B cell (primary cell): ENCODE measurements at regions of chr6 and their contacts with region 1.

Region 1: GRCh38 chr6:3356056-3356761 is 97.5 kb downstream of the PSMG4 start:
- DNase-seq: peak; percentile 97
- ATAC-seq: peak; percentile 96
- H3K4me3 ChIP-seq: peak overlapping the region; percentile 0 to 82 (median 66)
- H3K4me3 Mint-ChIP-seq: peak overlapping the region; percentile 96
- H3K27ac ChIP-seq: peak overlapping the region; percentile 67 to 82
- H3K27ac Mint-ChIP-seq: peak overlapping the region; percentile 96
- H3K4me1 ChIP-seq: peaks cover 26 to 37% of the 10 kb centered on the region in 2 donors
- H3K4me1 Mint-ChIP-seq: peaks cover 48% of the 10 kb centered on the region
- H3K27me3 ChIP-seq: no peaks in the 10 kb centered on the region
- H3K27me3 Mint-ChIP-seq: no peaks in the 10 kb centered on the region
- CTCF ChIP-seq: no peak

Region 2: DNA sequence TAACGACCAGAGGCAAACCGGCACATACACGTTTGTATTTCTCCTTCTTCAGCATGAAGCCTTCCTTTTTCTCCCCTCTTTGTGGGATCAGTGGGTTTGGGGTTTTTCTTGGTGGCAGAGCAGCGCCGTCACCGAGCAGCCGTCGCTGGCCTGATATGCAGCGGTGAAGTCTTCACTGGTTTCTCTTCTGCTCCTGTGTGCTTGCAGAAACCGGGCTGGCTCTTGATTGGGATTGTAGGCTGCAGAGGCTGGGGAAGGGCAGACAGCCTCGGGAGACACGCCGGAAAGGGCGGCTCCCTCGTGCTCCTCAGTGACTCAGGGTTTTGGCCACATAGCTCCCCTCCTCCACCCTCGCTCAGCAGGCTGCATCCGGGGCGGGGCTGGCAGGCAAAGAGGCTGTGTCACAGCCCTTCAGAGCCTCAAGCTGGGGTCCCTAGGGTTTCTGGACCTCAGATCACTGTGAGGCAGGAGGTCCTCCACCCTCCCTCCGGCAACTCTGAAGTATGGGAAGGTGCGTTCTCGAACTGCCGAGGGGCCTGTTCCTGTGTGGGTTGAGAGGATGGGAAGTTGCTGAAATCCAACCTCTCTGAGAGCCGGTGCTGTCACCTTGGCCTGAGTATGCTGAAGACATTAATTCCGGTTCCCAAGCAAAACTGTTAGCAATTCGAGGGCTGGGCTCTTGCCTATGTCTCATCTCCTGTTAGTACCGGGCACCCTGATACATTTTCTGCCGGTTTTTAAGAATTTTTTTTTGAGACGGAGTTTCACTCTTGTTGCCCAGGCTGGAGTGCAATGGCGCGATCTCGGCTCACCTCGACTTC is 332.3 kb before region 1 on chr6:
- CTCF ChIA-PET with region 1: no interaction called
- POLR2A ChIA-PET with region 1: no interaction called
- intact Hi-C with region 1: no loop called
- DNase-seq: peak; percentile 82
- ATAC-seq: peak; percentile 79
- H3K4me3 ChIP-seq: peak overlapping the region; percentile 45 to 88 (median 63)
- H3K4me3 Mint-ChIP-seq: peak overlapping the region; percentile 91
- H3K27ac ChIP-seq: peak overlapping the region; percentile 38 to 50
- H3K27ac Mint-ChIP-seq: peak overlapping the region; percentile 74
- H3K4me1 ChIP-seq: peaks cover 59 to 63% of the 10 kb centered on the region in 2 donors
- H3K4me1 Mint-ChIP-seq: peaks cover 50% of the 10 kb centered on the region
- H3K27me3 ChIP-seq: peaks cover 0 to 4% (median 0%) of the 10 kb centered on the region in 4 experiments
- H3K27me3 Mint-ChIP-seq: peaks cover 5% of the 10 kb centered on the region
- CTCF ChIP-seq: no peak

Region 3: GRCh38 chr6:3157131-3157927 is 198.9 kb before region 1 on chr6 and contains the start of gene TUBB2A:
- CTCF ChIA-PET with region 1: no interaction called
- POLR2A ChIA-PET with region 1: no interaction called
- intact Hi-C with region 1: loop called (anchors 2 kb)
- DNase-seq: peak; percentile 91
- ATAC-seq: peak; percentile 90
- H3K4me3 ChIP-seq: peak within 1 kb of the TSS; percentile 47 to 93 (median 65)
- H3K4me3 Mint-ChIP-seq: peak within 1 kb of the TSS; percentile 89
- H3K27ac ChIP-seq: peak within 1 kb of the TSS in 1 of 2 donors; percentile 67
- H3K27ac Mint-ChIP-seq: peak within 1 kb of the TSS; percentile 88
- H3K4me1 ChIP-seq: peaks cover 8 to 18% of the 10 kb centered on the region in 2 donors
- H3K4me1 Mint-ChIP-seq: peaks cover 24% of the 10 kb centered on the region
- H3K27me3 ChIP-seq: peaks cover 0 to 5% (median 0%) of the 10 kb centered on the region in 4 experiments
- H3K27me3 Mint-ChIP-seq: peaks cover 7% of the 10 kb centered on the region
- CTCF ChIP-seq: peak; percentile 70
- total RNA-seq, gene TUBB2A: 4.0 and 4.2 TPM in 2 replicates

Region 4: GRCh38 chr6:3281631-3282475 is 74.4 kb before region 1 on chr6:
- CTCF ChIA-PET with region 1: no interaction called
- POLR2A ChIA-PET with region 1: no interaction called
- intact Hi-C with region 1: loop called (anchors 1 kb)
- DNase-seq: no peak
- ATAC-seq: no peak
- H3K4me3 ChIP-seq: no peak overlapping the region
- H3K4me3 Mint-ChIP-seq: no peak overlapping the region
- H3K27ac ChIP-seq: no peak overlapping the region
- H3K27ac Mint-ChIP-seq: no peak overlapping the region
- H3K4me1 ChIP-seq: peaks cover 0 to 3% of the 10 kb centered on the region in 2 donors
- H3K4me1 Mint-ChIP-seq: peaks cover 2% of the 10 kb centered on the region
- H3K27me3 ChIP-seq: no peaks in the 10 kb centered on the region
- H3K27me3 Mint-ChIP-seq: no peaks in the 10 kb centered on the region
- CTCF ChIP-seq: no peak

Region 5: DNA sequence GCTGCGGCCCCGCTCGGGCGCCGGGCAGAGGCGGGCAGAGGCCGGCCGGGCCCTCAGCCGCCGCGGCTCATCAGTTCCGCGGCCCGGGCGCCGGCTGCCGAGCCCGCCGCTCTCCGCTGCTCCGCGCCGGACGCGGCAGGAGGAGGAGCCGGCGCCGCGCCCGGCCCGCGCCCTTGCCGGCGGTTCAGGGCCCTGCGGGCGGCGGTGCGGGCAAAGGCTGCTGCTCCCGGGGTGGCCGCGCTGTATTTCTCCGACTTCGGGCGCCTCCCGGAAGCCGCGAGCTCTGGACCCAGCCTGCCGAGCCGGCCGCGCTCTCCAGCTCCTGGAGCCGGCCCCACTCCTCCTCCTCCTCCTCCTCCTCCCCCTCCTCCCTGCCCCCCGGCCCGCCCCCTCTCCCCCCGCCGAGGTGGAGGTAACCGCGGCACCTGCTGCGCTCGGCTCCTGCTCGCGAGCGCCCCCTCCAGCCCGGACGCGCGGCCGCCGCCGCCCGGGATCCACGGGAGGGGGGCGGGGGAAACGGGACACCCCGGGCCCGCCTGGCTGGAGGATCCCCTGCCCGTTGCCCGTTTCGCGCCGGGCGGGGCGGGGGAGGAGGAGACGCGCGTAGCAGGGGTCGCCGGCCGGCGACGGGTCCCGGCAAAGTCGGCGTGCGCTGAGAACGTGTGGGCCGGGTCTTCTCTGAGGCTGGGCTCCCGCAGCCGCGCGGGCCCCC is 100.7 kb after region 1 on chr6 and contains the start of gene SLC22A23:
- CTCF ChIA-PET with region 1: no interaction called
- POLR2A ChIA-PET with region 1: no interaction called
- intact Hi-C with region 1: loop called (anchors 2 kb)
- DNase-seq: peak; percentile 81
- ATAC-seq: peak; percentile 80
- H3K4me3 ChIP-seq: peak within 1 kb of the TSS in 4 of 5 experiments; percentile 25 to 51 (median 45)
- H3K4me3 Mint-ChIP-seq: peak within 1 kb of the TSS; percentile 81
- H3K27ac ChIP-seq: no peak within 1 kb of the TSS
- H3K27ac Mint-ChIP-seq: peak within 1 kb of the TSS; percentile 42
- H3K4me1 ChIP-seq: peaks cover 23 to 24% of the 10 kb centered on the region in 2 donors
- H3K4me1 Mint-ChIP-seq: peaks cover 5% of the 10 kb centered on the region
- H3K27me3 ChIP-seq: peaks cover 0 to 58% (median 43%) of the 10 kb centered on the region in 4 experiments
- H3K27me3 Mint-ChIP-seq: peaks cover 38% of the 10 kb centered on the region
- CTCF ChIP-seq: peak; percentile 75
- total RNA-seq, gene SLC22A23: 0.75 and 1.4 TPM in 2 replicates

Region 6: DNA sequence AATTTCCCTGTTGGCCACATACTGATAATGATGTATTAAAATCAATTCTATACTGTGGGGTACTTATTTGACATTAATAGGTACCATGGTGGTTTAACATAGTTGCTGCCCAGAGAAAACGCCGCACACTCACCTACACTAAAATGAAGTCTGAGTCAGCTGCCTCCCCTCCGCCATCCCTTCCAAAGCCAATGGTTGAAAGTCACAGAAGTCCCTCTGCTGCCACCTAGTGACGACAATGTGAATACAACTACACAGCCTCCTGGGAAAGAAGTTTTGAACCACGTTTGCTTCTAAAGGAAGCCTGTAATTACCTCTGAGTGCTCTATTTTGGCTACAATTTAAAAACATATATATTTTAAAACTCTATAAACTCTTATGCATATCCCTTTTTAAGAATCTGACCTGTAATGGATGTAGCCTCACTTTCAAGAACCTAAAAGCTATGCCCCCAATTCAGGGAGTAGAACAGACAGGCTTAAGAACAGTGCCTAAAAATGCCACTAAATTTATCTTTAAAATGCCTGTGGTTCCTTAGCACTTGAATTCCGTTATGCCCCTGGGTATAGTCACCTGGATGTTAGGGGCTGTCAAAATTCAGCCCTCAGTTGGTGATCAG is 799.7 kb after region 1 on chr6:
- CTCF ChIA-PET with region 1: no interaction called
- POLR2A ChIA-PET with region 1: no interaction called
- intact Hi-C with region 1: loop called (anchors 5 kb)
- DNase-seq: peak; percentile 85
- ATAC-seq: peak; percentile 78
- H3K4me3 ChIP-seq: no peak overlapping the region
- H3K4me3 Mint-ChIP-seq: no peak overlapping the region
- H3K27ac ChIP-seq: no peak overlapping the region
- H3K27ac Mint-ChIP-seq: no peak overlapping the region
- H3K4me1 ChIP-seq: peaks cover 4 to 12% of the 10 kb centered on the region in 2 donors
- H3K4me1 Mint-ChIP-seq: peaks cover 31% of the 10 kb centered on the region
- H3K27me3 ChIP-seq: peaks cover 0 to 6% (median 0%) of the 10 kb centered on the region in 4 experiments
- H3K27me3 Mint-ChIP-seq: peaks cover 10% of the 10 kb centered on the region
- CTCF ChIP-seq: peak; percentile 94

Region 7: DNA sequence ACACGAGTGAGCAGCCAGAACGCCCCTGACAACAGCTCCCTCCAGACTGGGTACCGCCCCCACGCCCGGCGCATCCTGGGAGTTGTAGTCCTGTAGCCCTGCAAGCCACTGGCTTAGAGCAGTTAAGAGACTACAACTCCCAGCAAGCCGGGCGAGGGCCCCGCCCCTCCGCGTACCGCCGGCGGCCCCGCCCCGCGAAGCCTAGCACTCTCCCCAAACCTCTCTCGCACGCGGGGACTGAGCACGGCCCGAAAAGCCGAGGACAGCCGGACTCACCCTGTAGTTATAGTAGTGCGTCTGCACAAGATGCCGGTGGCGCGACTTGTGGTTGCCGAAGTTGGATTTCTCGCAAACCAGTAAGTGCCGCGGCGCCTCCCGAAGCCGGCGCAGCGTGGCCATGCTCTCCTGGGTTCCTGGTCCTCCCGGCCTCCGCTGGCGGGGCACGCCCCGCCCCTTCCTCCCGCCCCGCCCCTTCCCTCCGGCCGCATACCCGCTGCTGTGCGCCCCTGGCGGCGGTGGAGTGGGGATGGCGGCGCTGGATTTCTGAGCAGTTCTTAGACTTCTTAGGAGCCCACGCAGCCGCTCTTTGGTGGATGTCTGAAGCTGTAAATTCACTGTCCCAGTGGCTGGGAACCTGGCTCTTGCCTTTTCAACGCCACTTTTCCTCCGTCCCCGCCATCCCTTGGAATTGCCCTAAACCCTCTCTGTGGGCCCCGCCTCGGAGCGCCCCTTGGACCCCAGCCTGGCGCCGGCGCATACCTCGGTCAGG is 1647.6 kb after region 1 on chr6 and contains the start of gene RPP40:
- CTCF ChIA-PET with region 1: no interaction called
- POLR2A ChIA-PET with region 1: no interaction called
- intact Hi-C with region 1: loop called (anchors 10 kb)
- DNase-seq: peak; percentile 99
- ATAC-seq: peak; percentile 92
- H3K4me3 ChIP-seq: peak within 1 kb of the TSS; percentile 70 to 82 (median 71)
- H3K4me3 Mint-ChIP-seq: peak within 1 kb of the TSS; percentile 98
- H3K27ac ChIP-seq: peak within 1 kb of the TSS; percentile 81 to 90
- H3K27ac Mint-ChIP-seq: peak within 1 kb of the TSS; percentile 99
- H3K4me1 ChIP-seq: peaks cover 6 to 14% of the 10 kb centered on the region in 2 donors
- H3K4me1 Mint-ChIP-seq: peaks cover 10% of the 10 kb centered on the region
- H3K27me3 ChIP-seq: no peaks in the 10 kb centered on the region
- H3K27me3 Mint-ChIP-seq: no peaks in the 10 kb centered on the region
- CTCF ChIP-seq: peak; percentile 82
- total RNA-seq, gene RPP40: 3.8 TPM in 2 replicates